Heart left ventricle (tissue), 16 donors: ENCODE measurements at regions of chr12 and their contacts with region 1.

Region 1: DNA sequence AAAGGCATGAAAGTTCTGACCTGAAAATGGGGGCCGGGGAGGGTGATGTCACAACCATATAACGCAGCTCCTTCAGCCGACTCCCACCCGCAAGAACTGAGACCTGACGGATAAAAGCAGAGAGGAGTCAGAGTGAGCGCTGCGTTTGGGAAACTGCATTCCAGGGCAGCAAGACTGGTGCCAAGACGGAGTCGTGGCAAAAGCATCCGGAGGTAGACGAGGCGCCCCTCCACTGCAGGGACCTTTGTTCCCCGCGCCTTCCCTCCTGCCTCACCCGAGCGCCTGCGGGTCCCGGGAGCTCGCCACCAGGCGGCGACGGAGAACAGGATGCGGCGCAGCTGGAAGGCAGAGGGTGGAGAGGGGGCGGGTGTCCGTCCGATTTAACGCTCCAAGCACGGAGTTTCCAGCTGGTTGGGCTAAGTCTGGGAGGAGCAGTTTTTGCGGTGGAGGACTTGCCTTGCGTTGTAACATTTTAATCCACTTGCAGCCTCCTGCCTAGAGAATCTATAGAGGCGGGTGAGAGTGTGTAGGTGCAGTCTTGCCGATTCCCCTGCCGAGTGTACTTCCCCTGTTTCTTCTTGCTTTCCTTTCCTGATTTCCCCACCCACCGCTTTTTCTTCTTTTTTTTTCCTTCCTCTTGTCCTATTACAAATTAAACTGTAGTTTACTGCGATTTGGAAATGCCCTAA is 1.2 kb upstream of the CPNE8 start:
- DNase-seq: peak; percentile 88 to 92 (median 91)
- ATAC-seq: peak; percentile 72 to 88 (median 84)
- H3K4me3 ChIP-seq: peak overlapping the region; percentile 55 to 85 (median 74)
- H3K27ac ChIP-seq: peak overlapping the region; percentile 88 to 98 (median 94)
- H3K4me1 ChIP-seq: peaks cover 0 to 27% (median 17%) of the 10 kb centered on the region in 12 donors
- H3K27me3 ChIP-seq: no peaks in the 10 kb centered on the region
- CTCF ChIP-seq: peak; percentile 76 to 98 (median 87)
- POLR2A ChIP-seq: peak in 1 of 2 donors; percentile 37

Region 2: DNA sequence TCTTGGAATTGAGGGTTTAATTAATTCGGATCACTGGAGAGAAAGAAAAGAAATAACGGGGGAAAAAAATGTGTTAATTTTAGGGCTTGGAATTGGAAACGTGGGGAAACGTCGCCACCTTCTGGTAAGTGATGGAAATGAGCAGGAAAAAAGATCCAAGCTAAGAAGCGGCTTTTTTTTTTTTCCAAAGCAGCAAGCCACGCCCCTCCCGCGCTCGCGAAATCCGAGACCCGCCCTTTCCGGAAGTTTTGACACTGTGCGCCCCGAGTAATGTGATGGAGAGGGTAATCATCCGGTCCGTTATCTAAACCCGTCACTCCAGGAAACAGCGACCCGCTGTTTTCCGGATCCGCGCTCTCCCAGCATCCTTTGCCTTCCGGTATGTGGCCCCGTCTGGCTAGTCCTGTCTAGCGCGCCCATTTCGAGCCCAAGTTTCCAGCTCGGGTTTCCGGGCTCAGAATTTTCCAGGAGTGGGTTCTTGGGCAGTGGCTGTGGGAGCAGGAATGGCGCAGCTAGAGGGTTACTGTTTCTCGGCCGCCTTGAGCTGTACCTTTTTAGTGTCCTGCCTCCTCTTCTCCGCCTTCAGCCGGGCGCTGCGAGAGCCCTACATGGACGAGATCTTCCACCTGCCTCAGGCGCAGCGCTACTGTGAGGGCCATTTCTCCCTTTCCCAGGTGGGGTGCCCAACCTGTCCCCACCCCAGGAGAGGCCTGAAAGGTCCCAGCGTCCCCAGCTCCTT is 590.1 kb before region 1 on chr12 and contains the start of gene ALG10B:
- intact Hi-C with region 1: loop called in 3 of 10 experiments (anchors 10 kb)
- DNase-seq: peak; percentile 93 to 95 (median 94)
- ATAC-seq: peak; percentile 100
- H3K4me3 ChIP-seq: peak within 1 kb of the TSS; percentile 57 to 94 (median 76)
- H3K27ac ChIP-seq: peak within 1 kb of the TSS; percentile 57 to 88 (median 82)
- H3K4me1 ChIP-seq: peaks cover 0 to 17% (median 4%) of the 10 kb centered on the region in 12 donors
- H3K27me3 ChIP-seq: no peaks in the 10 kb centered on the region
- CTCF ChIP-seq: peak; percentile 62 to 87 (median 74)
- POLR2A ChIP-seq: no peak
- total RNA-seq, gene ALG10B: 2.0 to 8.0 (median 5.4) TPM

Region 3: DNA sequence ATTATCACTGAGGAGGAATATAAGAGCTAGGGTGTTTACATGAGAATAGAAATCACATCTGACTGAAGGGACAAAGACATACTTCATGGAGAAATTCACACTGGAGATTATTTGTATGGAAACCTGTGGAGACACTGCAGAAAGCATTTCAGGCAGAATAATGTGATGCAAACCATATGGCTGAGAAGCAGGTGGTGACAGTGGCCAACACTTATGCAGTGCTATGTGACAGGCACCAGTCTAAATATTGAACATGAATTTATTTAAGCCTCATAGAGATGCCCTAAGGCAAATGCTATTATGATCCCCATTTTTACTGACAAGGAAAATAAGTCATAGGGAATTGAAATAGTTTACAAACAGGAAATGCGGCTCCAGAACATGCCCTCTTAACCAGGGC is 573.8 kb before region 1 on chr12:
- intact Hi-C with region 1: loop called in 3 of 10 experiments (anchors 10 kb)
- DNase-seq: no peak
- ATAC-seq: no peak
- H3K4me3 ChIP-seq: no peak overlapping the region
- H3K27ac ChIP-seq: no peak overlapping the region
- H3K4me1 ChIP-seq: no peaks in the 10 kb centered on the region
- H3K27me3 ChIP-seq: no peaks in the 10 kb centered on the region
- CTCF ChIP-seq: no peak
- POLR2A ChIP-seq: no peak

Region 4: DNA sequence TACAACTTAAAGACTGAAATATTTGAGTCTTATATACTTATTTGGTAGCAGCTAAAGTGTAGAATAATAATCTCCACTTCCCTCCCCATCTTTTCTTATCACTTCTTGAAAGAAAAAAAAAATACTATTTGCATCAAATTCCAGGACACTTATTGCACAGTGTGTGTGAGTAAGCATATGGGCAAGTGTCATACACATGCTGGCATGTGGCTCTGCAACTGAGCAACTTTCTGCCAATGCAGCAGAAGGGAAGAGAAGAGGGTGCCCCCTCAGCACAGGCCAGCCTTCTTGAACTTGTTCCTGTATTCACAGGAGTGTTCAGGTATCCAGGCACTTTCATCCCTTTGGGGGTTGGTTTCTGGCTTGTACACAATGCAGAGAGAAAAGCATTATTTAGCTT is 147.0 kb before region 1 on chr12:
- intact Hi-C with region 1: loop called in 1 of 10 experiments (anchors 10 kb)
- DNase-seq: no peak
- ATAC-seq: no peak
- H3K4me3 ChIP-seq: no peak overlapping the region
- H3K27ac ChIP-seq: no peak overlapping the region
- H3K4me1 ChIP-seq: no peaks in the 10 kb centered on the region
- H3K27me3 ChIP-seq: no peaks in the 10 kb centered on the region
- CTCF ChIP-seq: no peak
- POLR2A ChIP-seq: no peak

Region 5: GRCh38 chr12:38850476-38850875 is 56.1 kb before region 1 on chr12:
- intact Hi-C with region 1: loop called in 1 of 10 experiments (anchors 5 kb)
- DNase-seq: no peak
- ATAC-seq: no peak
- H3K4me3 ChIP-seq: no peak overlapping the region
- H3K27ac ChIP-seq: no peak overlapping the region
- H3K4me1 ChIP-seq: peaks cover 0 to 14% (median 0%) of the 10 kb centered on the region in 12 donors
- H3K27me3 ChIP-seq: no peaks in the 10 kb centered on the region
- CTCF ChIP-seq: no peak
- POLR2A ChIP-seq: no peak

Region 6: GRCh38 chr12:38956337-38956736 is 49.7 kb after region 1 on chr12:
- intact Hi-C with region 1: no loop called
- DNase-seq: no peak
- ATAC-seq: no peak
- H3K4me3 ChIP-seq: no peak overlapping the region
- H3K27ac ChIP-seq: no peak overlapping the region
- H3K4me1 ChIP-seq: no peaks in the 10 kb centered on the region
- H3K27me3 ChIP-seq: no peaks in the 10 kb centered on the region
- CTCF ChIP-seq: no peak
- POLR2A ChIP-seq: no peak